Dorsolateral prefrontal cortex (tissue), 120 donors: ENCODE measurements at regions of chr15 and their contacts with region 1.

Region 1: GRCh38 chr15:89556413-89557262 is 18.6 kb upstream of the TICRR start:
- DNase-seq: peak in 5 of 10 donors; percentile 24 to 74 (median 47)
- H3K4me3 ChIP-seq: no peak overlapping the region
- H3K27ac ChIP-seq: no peak overlapping the region
- H3K27me3 ChIP-seq: peaks cover 0 to 5% (median 0%) of the 10 kb centered on the region in 45 donors
- CTCF ChIP-seq: peak; percentile 65 to 89 (median 79)

Region 2: DNA sequence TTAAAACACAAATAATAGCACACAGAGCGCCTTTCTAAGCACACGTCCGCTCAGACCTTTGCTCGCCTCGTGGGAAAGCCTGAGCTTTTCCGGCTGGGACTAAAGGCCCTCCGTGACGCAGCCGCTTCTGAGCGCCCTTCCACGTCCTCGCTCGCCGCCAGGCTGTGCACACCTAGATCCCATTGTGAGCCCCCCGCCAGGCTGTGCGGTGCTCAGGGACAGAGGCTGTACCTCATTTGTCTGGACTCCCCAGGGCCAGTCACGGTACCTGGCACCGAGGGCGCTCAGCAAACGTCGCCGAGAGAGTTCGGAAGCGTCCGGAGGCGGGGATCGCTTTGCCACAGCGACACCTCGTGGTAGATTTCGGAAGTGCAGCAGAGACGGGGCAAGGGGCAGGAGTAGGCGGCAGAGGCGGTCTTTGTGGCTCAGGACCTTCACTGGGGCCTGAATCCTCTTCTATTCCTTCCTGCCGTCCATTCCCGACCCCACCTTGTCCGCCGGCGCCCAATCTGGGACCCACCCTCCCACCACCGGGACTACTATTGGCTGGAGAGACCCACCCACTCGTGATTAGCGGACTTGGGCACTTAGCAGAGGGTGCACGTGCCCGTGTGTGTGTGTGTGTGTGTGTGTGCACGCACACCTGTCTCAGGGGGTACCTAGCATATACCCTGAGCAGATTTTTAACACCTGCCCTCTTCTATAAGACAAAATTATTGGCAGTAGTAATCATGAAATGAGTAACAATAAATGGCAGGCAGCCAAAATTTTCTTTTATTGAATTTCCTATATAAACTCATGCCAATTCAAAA is 125.9 kb before region 1 on chr15:
- intact Hi-C with region 1: loop called in 1 of 2 experiments (anchors 10 kb)
- DNase-seq: peak; percentile 73 to 92 (median 89)
- H3K4me3 ChIP-seq: peak overlapping the region; percentile 29 to 84 (median 59)
- H3K27ac ChIP-seq: peak overlapping the region in 53 of 59 donors; percentile 3 to 93 (median 66)
- H3K27me3 ChIP-seq: no peaks in the 10 kb centered on the region
- CTCF ChIP-seq: peak; percentile 94 to 100 (median 99)

Region 3: DNA sequence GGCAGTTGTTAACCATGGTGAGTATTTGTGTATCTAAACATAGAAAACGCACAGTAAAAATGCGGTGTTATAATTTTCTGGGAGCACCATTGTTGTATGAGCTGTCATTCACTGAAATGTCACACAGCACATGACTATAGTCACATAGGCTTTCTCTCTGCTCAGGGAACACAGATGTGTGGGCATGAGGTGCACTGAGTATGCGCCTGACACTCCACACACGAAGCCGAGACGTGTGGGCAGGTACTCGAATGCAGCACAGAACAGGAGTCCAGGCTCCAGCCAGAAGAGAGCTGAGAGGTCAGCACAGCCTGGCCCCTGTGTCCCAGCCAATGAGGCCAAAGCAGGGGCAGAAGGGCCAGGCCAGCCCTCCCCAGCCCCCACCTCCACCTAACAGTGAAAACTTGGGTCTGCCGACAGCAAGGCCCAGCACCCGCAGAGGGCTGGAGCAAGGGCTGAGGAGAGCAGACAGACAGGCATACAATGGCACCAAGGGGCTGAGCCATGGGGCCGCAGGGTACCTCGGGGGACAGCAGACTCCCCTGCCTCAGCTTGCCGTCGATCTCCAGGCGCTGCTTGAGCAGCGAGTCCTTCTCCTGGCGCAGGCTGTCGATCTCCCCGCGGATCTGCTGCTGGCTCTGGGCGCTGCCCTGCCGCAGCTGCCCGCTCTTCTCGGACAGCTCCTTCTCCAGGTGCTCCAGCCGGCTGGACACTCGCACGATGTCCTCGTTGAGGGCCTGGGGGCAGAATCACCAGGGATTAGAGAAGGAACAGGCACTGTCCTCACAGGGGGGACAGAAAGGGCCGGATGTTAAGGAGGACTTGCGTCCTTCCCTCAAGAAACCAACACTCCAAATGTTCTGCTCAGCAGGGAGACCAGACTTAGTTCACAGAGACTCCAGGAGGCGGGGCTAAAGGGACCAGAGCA is 74.6 kb after region 1 on chr15:
- intact Hi-C with region 1: no loop called
- DNase-seq: no peak
- H3K4me3 ChIP-seq: no peak overlapping the region
- H3K27ac ChIP-seq: no peak overlapping the region
- H3K27me3 ChIP-seq: no peaks in the 10 kb centered on the region
- CTCF ChIP-seq: no peak